A673 (cell line): ENCODE measurements at regions of chr5 and their contacts with region 1.

Region 1: GRCh38 chr5:148179234-148179824 is 11.0 kb downstream of the SPINK14 start:
- DNase-seq: peak; percentile 58
- H3K4me3 ChIP-seq: no peak overlapping the region
- H3K27ac ChIP-seq: no peak overlapping the region
- H3K4me1 ChIP-seq: no peaks in the 10 kb centered on the region
- H3K27me3 ChIP-seq: peaks cover 32% of the 10 kb centered on the region
- CTCF ChIP-seq: peak; percentile 69

Region 2: GRCh38 chr5:148374692-148375360 is 195.5 kb after region 1 on chr5:
- CTCF ChIA-PET with region 1: no interaction called
- POLR2A ChIA-PET with region 1: no interaction called
- intact Hi-C with region 1: loop called (anchors 2 kb)
- DNase-seq: peak; percentile 69
- H3K4me3 ChIP-seq: no peak overlapping the region
- H3K27ac ChIP-seq: no peak overlapping the region
- H3K4me1 ChIP-seq: no peaks in the 10 kb centered on the region
- H3K27me3 ChIP-seq: no peaks in the 10 kb centered on the region
- CTCF ChIP-seq: peak; percentile 79

Region 3: DNA sequence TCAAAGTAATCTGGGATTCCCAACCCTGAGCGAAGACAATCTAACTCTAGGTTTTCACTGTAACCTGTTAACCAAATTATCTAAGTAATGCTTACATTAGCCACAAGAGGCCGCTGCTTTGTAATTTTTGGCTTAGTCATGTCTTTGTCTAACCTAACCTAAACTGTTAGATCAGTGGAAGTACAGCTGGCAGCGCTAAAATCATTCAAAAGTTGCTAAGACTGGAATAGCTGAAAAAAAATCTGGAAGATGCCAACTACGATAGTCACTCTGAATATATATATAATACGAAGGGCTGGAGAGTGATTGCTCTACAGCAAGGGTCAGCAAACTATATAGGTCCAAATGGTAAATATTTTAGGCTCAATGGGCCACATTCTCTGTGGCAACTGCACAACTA is 264.7 kb after region 1 on chr5:
- CTCF ChIA-PET with region 1: no interaction called
- POLR2A ChIA-PET with region 1: no interaction called
- intact Hi-C with region 1: loop called (anchors 10 kb)
- DNase-seq: peak; percentile 76
- H3K4me3 ChIP-seq: no peak overlapping the region
- H3K27ac ChIP-seq: no peak overlapping the region
- H3K4me1 ChIP-seq: no peaks in the 10 kb centered on the region
- H3K27me3 ChIP-seq: no peaks in the 10 kb centered on the region
- CTCF ChIP-seq: peak; percentile 79

Region 4: GRCh38 chr5:149035372-149035790 is 856.1 kb after region 1 on chr5:
- CTCF ChIA-PET with region 1: no interaction called
- POLR2A ChIA-PET with region 1: no interaction called
- intact Hi-C with region 1: loop called (anchors 10 kb)
- DNase-seq: peak; percentile 80
- H3K4me3 ChIP-seq: no peak overlapping the region
- H3K27ac ChIP-seq: no peak overlapping the region
- H3K4me1 ChIP-seq: no peaks in the 10 kb centered on the region
- H3K27me3 ChIP-seq: no peaks in the 10 kb centered on the region
- CTCF ChIP-seq: peak; percentile 85